ENCODE measurements at regions of chr9 and their contacts with region 1.

Region 1: DNA sequence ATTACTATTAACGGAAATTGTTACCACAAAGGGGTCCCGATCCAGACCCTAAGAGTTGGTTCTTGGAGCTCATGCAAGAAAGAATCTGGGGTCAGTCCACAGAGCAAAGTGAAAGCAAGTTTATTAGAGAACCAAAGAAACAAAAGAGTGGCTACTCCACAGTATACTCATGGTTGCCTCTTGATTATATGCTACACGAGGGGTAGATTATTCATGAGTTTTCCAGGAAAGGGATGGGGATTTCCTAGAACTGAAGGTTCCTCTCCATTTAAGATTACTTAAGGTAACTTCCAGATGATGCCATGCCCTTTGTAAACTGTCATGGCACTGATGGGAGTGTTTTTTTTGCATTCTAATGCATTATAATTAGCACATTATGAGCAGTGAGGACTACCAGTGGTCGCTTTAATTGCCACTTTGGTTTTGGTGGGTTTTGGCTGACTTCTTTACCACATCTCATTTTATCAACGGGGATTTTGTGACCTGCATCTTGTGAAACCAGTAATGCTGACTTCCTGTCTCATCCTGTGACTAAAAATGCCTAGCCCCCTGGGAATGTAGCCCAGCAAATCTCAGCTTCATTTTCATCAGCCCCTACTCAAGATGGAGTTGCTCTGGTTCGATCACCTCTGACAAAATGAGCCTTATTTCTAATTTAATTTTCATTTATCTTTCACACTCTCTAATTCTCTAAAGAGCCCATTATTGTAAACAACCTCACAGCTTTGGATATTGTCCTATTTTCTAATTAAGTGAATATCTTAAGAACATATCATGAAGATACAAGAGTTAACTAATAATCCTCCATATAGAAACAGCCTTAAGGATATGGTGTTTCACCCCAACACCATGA is 336.3 kb downstream of the RASEF start:
- DNase-seq: peak; percentile 44
- ATAC-seq: peak; percentile 79
- H3K4me3 ChIP-seq: no peak overlapping the region
- H3K27ac ChIP-seq: no peak overlapping the region
- H3K4me1 ChIP-seq: no peaks in the 10 kb centered on the region
- H3K27me3 ChIP-seq: no peaks in the 10 kb centered on the region
- CTCF ChIP-seq: no peak
- EP300 ChIP-seq: peak; percentile 64 to 74; a peak in 3 of 4 replicates
- POLR2A ChIP-seq: no peak
- RAD21 ChIP-seq: no peak

Region 2: DNA sequence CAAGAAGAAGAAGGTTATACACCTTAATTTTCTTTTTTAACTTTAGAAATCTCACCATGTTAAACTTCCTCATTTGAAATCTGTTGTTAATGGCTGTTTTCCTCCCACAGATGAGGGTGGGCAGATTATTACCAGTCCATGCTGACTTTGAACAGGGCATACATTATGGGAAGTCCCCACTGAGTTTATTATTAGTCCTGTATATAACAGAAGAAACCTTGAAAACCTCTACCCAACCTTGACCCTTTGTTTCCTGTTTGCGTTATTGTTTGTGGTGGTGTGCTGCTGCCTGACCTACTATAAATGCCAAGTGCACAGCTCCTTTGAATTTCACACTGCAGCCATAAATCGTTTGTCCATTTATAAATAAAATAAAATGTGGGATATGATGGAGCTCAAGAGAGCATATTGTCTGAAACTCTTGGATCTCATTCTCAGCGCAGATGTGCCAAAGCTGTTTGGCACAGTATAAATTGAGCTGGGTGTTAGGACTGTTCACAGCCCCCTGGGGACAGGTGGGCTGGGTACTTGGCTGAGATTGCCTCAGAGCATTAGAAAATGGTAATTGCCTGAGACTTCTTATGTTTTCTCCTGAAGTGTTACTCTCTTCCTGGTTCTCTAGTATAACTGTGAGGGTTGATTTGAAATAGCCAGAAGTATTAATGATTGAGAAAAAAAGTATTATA is 598.5 kb before region 1 on chr9:
- CTCF ChIA-PET with region 1: no interaction called
- POLR2A ChIA-PET with region 1: no interaction called
- RAD21 ChIA-PET with region 1: no interaction called
- SMC1A ChIA-PET with region 1: no interaction called
- in situ Hi-C with region 1: no loop called
- intact Hi-C with region 1: loop called (anchors 5 kb)
- DNase-seq: no peak
- ATAC-seq: peak; percentile 85
- H3K4me3 ChIP-seq: no peak overlapping the region
- H3K27ac ChIP-seq: no peak overlapping the region
- H3K4me1 ChIP-seq: no peaks in the 10 kb centered on the region
- H3K27me3 ChIP-seq: no peaks in the 10 kb centered on the region
- CTCF ChIP-seq: no peak
- EP300 ChIP-seq: peak in 1 of 2 experiments; percentile 23; a peak in 1 of 4 replicates
- POLR2A ChIP-seq: no peak
- RAD21 ChIP-seq: no peak

Region 3: DNA sequence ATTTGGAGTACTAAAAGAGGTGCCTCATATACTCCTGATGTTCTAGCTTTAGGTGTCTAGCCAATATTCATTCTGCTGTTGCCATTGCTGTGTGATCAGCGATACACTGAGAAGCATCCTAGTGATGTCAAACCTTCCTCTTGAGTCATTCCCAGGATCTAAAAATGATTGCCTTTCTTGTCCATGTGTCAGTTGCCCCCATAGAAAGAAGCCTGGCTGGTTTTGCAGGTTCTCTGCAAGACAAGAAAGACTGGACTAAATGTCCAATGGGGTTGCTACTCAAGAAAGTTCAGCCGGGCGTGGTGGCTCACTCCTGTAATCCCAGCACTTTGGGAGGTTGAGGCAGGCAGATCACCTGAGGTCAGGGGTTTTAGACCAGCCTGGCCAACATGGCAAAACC is 13.4 kb after region 1 on chr9:
- CTCF ChIA-PET with region 1: no interaction called
- POLR2A ChIA-PET with region 1: no interaction called
- RAD21 ChIA-PET with region 1: no interaction called
- SMC1A ChIA-PET with region 1: no interaction called
- in situ Hi-C with region 1: no loop called
- intact Hi-C with region 1: no loop called
- DNase-seq: no peak
- ATAC-seq: no peak
- H3K4me3 ChIP-seq: no peak overlapping the region
- H3K27ac ChIP-seq: no peak overlapping the region
- H3K4me1 ChIP-seq: no peaks in the 10 kb centered on the region
- H3K27me3 ChIP-seq: no peaks in the 10 kb centered on the region
- CTCF ChIP-seq: no peak
- EP300 ChIP-seq: no peak
- POLR2A ChIP-seq: no peak
- RAD21 ChIP-seq: no peak

Region 4: DNA sequence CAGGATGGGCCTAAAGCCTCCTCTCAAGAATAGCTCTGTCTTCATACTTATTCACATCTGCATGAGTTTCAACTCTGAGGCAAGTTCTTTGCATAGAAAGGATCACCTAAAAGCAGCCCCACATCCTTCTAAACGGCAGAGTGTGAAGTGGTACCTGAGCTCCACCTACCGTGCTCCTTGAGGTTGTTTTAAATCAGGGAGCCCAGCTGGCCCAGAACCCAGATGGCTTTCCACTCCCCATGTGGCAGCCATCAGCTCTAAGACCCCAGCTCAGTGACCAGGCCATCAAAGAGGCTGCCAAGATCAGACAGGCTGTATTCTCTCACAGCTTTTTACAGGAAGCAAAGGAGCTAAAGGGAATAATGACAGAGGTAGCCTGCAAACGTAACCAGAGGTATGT is 37.0 kb after region 1 on chr9:
- CTCF ChIA-PET with region 1: interaction called, 3 read pairs
- POLR2A ChIA-PET with region 1: no interaction called
- RAD21 ChIA-PET with region 1: no interaction called
- SMC1A ChIA-PET with region 1: no interaction called
- in situ Hi-C with region 1: no loop called
- intact Hi-C with region 1: loop called (anchors 5 kb)
- DNase-seq: no peak
- ATAC-seq: peak; percentile 37; the same call in 1 of the 3 replicates
- H3K4me3 ChIP-seq: no peak overlapping the region
- H3K27ac ChIP-seq: no peak overlapping the region
- H3K4me1 ChIP-seq: no peaks in the 10 kb centered on the region
- H3K27me3 ChIP-seq: no peaks in the 10 kb centered on the region
- CTCF ChIP-seq: peak in 1 of 3 experiments; percentile 32; a peak in 2 of 6 replicates
- EP300 ChIP-seq: no peak
- POLR2A ChIP-seq: no peak
- RAD21 ChIP-seq: 0 out of 2 replicates have a peak, but pooled peaks have one; percentile 28